SK-N-SH (cell line): ENCODE measurements at regions of chr10 and their contacts with region 1.

Region 1: GRCh38 chr10:93916257-93917063 is 22.7 kb downstream of the SLC35G1 start:
- DNase-seq: peak; percentile 34
- H3K4me3 ChIP-seq: no peak overlapping the region
- H3K27ac ChIP-seq: no peak overlapping the region
- H3K4me1 ChIP-seq: peaks cover 0 to 3% of the 10 kb centered on the region in 2 experiments; a peak in 1 of 4 replicates
- H3K27me3 ChIP-seq: no peaks in the 10 kb centered on the region
- CTCF ChIP-seq: peak; percentile 81
- EP300 ChIP-seq: no peak
- RAD21 ChIP-seq: peak; percentile 80

Region 2: DNA sequence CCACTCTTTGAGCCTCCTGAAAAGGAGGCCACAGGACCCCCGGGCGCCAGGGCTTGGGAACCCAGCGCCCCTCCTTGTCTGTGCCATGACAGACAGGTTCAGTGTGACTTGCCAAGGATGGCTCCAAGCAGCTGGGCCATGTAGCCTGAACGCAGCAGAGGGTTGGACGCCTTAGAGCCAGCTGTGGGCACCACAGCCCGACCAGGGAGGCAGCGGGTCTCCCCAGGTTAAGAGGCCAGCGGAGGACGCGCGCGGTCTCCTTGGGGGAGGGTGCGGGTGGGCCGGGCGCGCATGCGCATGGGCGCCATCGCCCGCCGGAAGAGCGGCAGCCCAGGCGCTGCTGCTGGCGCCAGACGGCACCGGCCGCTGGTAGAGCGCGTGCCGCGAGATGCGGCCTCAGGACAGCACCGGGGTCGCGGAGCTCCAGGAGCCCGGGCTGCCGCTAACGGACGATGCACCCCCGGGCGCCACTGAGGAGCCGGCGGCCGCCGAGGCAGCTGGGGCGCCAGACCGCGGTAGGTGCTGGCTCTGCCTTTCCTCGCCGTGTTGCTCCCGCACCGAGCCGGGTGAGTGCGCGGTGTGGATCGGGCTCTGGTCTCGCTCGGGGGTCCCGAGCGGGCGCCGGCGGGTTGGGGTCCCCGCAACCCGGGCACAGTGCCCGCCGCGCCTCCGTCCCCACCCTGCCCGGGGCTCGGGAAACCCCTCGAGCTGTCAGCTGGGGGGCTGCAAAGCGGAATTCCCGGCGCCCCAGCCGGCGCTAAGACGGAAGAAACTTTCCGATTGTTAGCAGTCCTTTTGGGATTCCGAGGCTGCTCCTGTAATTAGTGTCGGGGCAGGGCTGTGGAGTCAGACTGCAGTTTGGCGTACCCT is 22.6 kb before region 1 on chr10 and contains the start of gene SLC35G1:
- CTCF ChIA-PET with region 1: interaction called, 11 read pairs
- POLR2A ChIA-PET with region 1: no interaction called
- DNase-seq: peak; percentile 95
- H3K4me3 ChIP-seq: peak within 1 kb of the TSS; percentile 69 to 88
- H3K27ac ChIP-seq: peak within 1 kb of the TSS in 1 of 2 experiments; percentile 79; a peak in 2 of 4 replicates
- H3K4me1 ChIP-seq: peaks cover 8 to 12% of the 10 kb centered on the region in 2 experiments; a peak in 3 of 4 replicates
- H3K27me3 ChIP-seq: no peaks in the 10 kb centered on the region
- CTCF ChIP-seq: no peak
- EP300 ChIP-seq: no peak
- RAD21 ChIP-seq: no peak
- polyA plus RNA-seq, gene SLC35G1: 5.1 and 7.3 TPM in 2 replicates

Region 3: GRCh38 chr10:93973748-93974445 is 57.4 kb after region 1 on chr10:
- CTCF ChIA-PET with region 1: interaction called, 10 read pairs
- POLR2A ChIA-PET with region 1: no interaction called
- DNase-seq: no peak
- H3K4me3 ChIP-seq: no peak overlapping the region
- H3K27ac ChIP-seq: no peak overlapping the region
- H3K4me1 ChIP-seq: peaks cover 0 to 2% of the 10 kb centered on the region in 2 experiments; a peak in 1 of 4 replicates
- H3K27me3 ChIP-seq: no peaks in the 10 kb centered on the region
- CTCF ChIP-seq: no peak
- EP300 ChIP-seq: no peak
- RAD21 ChIP-seq: no peak

Region 4: GRCh38 chr10:94308866-94309265 is 392.4 kb after region 1 on chr10:
- CTCF ChIA-PET with region 1: interaction called, 118 read pairs
- POLR2A ChIA-PET with region 1: no interaction called
- DNase-seq: no peak
- H3K4me3 ChIP-seq: no peak overlapping the region
- H3K27ac ChIP-seq: no peak overlapping the region
- H3K4me1 ChIP-seq: no peaks in the 10 kb centered on the region
- H3K27me3 ChIP-seq: no peaks in the 10 kb centered on the region
- CTCF ChIP-seq: no peak
- EP300 ChIP-seq: no peak
- RAD21 ChIP-seq: no peak